Posterior vena cava (tissue), 2 donors: ENCODE measurements at regions of chr4 and their contacts with region 1.

Region 1: GRCh38 chr4:87375719-87376291 is 15.2 kb downstream of the HSD17B11 start:
- DNase-seq: no peak

Region 2: DNA sequence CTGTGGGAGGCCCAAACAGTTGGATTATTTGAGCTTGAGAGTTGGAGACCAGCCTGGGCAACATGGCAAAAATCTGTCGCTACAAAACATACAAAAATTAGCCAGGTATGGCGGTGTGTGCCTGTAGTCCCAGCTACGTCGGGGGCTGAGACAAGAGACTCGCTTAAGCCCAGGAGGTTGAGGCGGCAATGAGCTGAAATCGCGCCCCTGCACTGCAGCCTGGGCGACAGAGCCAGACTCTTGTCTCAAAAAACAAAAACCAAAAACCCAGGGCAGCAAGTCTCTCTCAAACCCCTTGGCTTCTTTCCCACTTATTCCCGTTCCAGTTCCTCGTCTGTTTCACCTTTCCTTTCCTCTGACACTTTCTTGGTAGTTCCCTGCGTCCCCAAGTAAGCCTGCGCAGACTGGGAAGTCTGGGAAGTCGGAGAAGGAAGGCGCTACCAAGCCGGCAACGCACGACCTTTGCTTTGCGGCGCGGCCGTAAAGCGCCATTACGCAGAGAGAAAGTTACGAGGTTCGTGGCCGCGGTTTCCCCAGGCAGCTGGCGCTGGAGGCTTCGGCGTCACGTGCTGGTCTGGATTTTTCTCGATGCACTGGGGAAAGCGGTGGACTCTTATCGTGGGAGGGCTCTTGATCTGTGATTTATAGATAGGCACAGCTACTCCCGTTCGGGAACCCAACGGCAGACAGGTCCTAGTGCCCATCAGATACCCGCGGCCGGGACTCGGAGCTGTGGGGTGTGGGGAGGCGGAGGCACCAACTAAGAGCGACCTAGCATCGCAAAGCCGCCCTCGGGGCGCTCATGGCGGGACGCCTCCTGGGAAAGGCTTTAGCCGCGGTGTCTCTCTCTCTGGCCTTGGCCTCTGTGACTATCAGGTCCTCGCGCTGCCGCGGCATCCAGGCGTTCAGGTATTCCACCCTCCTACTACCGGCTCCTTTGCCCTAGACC is 46.6 kb after region 1 on chr4 and contains the start of gene NUDT9:
- intact Hi-C with region 1: loop called in 1 of 2 experiments (anchors 10 kb)
- DNase-seq: peak; percentile 99
- total RNA-seq, gene NUDT9: 18.9 to 21.8 TPM

Region 3: GRCh38 chr4:87461281-87461700 is 85.5 kb after region 1 on chr4:
- intact Hi-C with region 1: loop called in 1 of 2 experiments (anchors 5 kb)
- DNase-seq: no peak

Region 4: DNA sequence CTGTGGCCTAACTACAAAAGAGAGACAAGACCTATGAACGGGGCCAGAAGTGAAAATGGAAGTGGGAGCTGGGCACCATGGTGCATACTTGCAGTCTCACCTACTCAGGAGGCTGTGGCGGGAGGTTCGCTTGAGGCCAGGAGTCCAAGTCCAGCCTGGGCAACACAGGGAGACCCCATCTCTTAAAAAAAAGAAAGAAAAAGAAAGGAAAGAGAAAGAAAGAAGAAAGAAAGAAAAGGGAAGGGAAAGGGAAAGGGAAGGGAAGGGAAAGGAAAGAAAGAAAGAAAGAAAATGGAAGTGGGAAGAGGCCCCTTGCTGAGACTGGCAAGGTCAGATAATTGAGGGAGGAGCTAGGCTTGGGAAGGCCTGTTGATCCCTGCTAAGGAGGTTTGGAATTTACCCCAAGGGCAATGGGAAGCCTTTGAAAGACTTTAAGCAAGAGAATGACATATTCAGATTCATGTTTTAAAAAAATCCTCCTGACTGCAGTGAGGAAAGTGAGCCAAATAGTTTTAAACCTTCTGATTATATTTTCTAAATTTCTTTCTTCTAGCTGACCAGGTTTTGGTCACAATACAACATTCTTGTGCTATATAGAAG is 1063.5 kb after region 1 on chr4:
- intact Hi-C with region 1: no loop called
- DNase-seq: no peak